ENCODE measurements at regions of chr7 and their contacts with region 1.

Region 1: GRCh38 chr7:41977151-41977651 is 259.8 kb downstream of the GLI3 start:
- DNase-seq: no peak
- H3K4me3 Mint-ChIP-seq: no peak overlapping the region
- H3K27ac Mint-ChIP-seq: no peak overlapping the region
- H3K4me1 Mint-ChIP-seq: peaks cover 3% of the 10 kb centered on the region
- H3K27me3 Mint-ChIP-seq: peaks cover 17% of the 10 kb centered on the region

Region 2: DNA sequence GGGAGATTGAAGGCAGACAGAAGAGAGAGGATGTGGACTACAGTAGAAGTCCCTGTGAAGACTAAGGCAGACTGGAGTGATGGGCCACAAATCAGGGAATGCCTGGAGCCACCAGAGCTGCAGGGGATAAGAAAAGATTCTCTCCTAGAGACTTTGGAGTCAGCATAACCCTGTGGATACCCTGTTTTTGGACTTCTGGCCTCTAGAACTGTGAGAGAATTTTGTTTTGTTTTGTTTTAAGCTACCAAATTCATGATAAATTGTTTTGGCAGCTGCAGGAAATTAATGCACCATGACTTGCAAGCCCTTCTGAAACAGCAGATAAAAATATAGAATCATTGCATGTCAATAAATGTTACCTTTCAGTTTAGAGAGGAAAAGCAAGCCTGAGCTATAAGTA is 315.6 kb before region 1 on chr7:
- CTCF ChIA-PET with region 1: no interaction called
- DNase-seq: no peak
- H3K4me3 Mint-ChIP-seq: no peak overlapping the region
- H3K27ac Mint-ChIP-seq: no peak overlapping the region
- H3K4me1 Mint-ChIP-seq: no peaks in the 10 kb centered on the region
- H3K27me3 Mint-ChIP-seq: no peaks in the 10 kb centered on the region

Region 3: GRCh38 chr7:41881331-41882130 is 95.7 kb before region 1 on chr7:
- CTCF ChIA-PET with region 1: no interaction called
- DNase-seq: peak; percentile 84
- H3K4me3 Mint-ChIP-seq: peak overlapping the region; percentile 55
- H3K27ac Mint-ChIP-seq: peak overlapping the region; percentile 98
- H3K4me1 Mint-ChIP-seq: peaks cover 34% of the 10 kb centered on the region
- H3K27me3 Mint-ChIP-seq: peaks cover 6% of the 10 kb centered on the region

Region 4: GRCh38 chr7:42035210-42035609 is 58.0 kb after region 1 on chr7:
- CTCF ChIA-PET with region 1: no interaction called
- DNase-seq: no peak
- H3K4me3 Mint-ChIP-seq: no peak overlapping the region
- H3K27ac Mint-ChIP-seq: no peak overlapping the region
- H3K4me1 Mint-ChIP-seq: no peaks in the 10 kb centered on the region
- H3K27me3 Mint-ChIP-seq: no peaks in the 10 kb centered on the region

Region 5: GRCh38 chr7:42876182-42877068 is 899.2 kb after region 1 on chr7:
- CTCF ChIA-PET with region 1: interaction called, 13 read pairs
- DNase-seq: peak; percentile 65
- H3K4me3 Mint-ChIP-seq: no peak overlapping the region
- H3K27ac Mint-ChIP-seq: no peak overlapping the region
- H3K4me1 Mint-ChIP-seq: no peaks in the 10 kb centered on the region
- H3K27me3 Mint-ChIP-seq: peaks cover 13% of the 10 kb centered on the region

Measured in activated naive CD4-positive, alpha-beta T cell treated with anti-CD3 and anti-CD28 coated beads, Interleukin-2, amount 10 ng/mL, durations not matched to agents 7 days and 5 days (primary cell).